GM18951 (cell line): ENCODE measurements at regions of chr3 and their contacts with region 1.

Region 1: DNA sequence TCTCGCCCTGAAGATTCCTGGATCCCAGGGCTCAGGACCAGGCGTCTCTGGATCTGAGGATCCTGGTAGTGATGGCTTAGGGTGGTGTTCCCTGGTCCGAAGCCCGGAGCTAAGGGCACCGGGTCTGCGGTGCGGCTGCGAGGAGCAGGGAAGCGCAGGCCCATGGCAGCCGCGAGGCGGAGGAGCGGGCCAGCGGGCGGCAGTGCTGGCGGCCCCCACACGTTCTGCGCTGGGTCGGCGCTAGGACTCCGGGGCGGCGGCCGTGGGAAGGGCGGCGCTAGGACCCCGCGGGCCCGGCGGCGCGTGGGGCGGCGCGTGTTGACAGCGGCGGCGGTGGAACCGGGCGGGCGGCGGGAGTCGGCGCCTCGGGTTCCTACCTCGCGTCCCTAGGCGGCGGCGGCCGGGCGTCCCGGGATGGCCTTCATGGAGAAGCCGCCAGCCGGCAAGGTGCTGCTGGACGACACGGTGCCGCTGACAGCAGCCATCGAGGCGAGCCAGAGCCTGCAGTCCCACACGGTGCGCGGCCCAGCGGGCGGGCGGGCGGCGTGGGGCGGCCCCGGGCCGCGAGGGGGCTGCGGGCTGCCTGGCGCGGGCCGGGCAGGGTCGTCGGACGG is at the start of gene PXK:
- POLR2A ChIP-seq: peak; percentile 48

Region 2: DNA sequence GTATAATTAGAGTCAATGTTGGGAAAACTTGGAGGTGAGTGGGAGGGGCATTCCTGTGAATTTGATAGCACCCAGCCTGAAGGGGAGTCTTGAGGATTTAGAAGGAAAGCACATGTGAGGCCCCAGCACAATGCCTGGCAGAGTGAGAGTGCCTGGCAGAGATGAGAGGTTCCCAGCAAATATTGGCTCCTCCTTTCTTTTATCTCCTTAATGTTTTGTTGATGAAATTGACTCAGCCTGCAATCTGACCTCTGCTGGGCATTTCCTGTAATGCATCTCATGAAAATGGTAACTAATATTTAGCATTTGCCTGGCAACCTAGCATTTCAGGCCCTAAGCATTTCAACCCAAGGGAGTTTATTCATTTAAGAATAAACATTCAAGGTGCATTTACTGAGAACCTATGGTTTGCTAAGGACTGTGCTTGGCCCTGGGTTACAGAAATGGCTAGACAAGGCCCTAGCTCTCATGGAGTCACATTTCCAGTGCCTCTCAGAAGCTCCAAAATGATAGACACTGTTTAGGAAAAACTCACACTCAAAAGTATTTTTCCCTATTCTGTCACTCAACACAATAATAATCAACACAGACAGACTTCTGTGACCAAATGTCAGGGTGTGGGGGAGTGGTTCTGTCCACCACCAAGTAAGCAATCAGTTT is 82.0 kb after region 1 on chr3:
- in situ Hi-C with region 1: loop called (anchors 5 kb)
- POLR2A ChIP-seq: no peak

Region 3: DNA sequence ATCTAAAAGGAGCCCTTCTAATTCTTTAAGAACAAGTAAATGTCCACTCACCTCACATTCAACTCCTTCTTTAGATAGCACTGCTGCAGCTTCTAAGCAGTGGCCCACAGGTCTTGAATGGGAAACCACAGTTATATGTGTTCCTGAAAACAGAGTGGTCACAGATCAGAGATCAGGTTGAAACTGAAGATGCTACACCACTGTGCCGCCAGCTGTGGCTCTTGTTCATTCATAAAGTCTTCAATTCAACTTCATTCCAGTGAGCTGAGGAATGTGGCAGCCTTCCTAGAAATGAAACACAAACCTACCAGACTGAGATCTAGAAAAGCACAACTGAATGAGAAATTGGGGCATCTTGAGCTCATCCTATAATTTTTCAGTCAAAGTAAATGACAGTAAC is 97.0 kb after region 1 on chr3:
- in situ Hi-C with region 1: no loop called
- POLR2A ChIP-seq: no peak